Activated naive CD4-positive, alpha-beta T cell treated with anti-CD3 and anti-CD28 coated beads for 36 hours (primary cell): ENCODE measurements at regions of chr11 and their contacts with region 1.

Region 1: GRCh38 chr11:48307760-48308386 is 1.9 kb downstream of the OR4S1 start:
- DNase-seq: peak; percentile 87
- H3K4me3 Mint-ChIP-seq: no peak overlapping the region
- H3K27ac Mint-ChIP-seq: no peak overlapping the region
- H3K4me1 Mint-ChIP-seq: no peaks in the 10 kb centered on the region
- H3K27me3 Mint-ChIP-seq: peaks cover 10% of the 10 kb centered on the region

Region 2: GRCh38 chr11:48013269-48013901 is 294.5 kb before region 1 on chr11:
- CTCF ChIA-PET with region 1: no interaction called
- intact Hi-C with region 1: no loop called
- DNase-seq: peak; percentile 59
- H3K4me3 Mint-ChIP-seq: no peak overlapping the region
- H3K27ac Mint-ChIP-seq: peak overlapping the region; percentile 76
- H3K4me1 Mint-ChIP-seq: peaks cover 82% of the 10 kb centered on the region
- H3K27me3 Mint-ChIP-seq: no peaks in the 10 kb centered on the region

Region 3: DNA sequence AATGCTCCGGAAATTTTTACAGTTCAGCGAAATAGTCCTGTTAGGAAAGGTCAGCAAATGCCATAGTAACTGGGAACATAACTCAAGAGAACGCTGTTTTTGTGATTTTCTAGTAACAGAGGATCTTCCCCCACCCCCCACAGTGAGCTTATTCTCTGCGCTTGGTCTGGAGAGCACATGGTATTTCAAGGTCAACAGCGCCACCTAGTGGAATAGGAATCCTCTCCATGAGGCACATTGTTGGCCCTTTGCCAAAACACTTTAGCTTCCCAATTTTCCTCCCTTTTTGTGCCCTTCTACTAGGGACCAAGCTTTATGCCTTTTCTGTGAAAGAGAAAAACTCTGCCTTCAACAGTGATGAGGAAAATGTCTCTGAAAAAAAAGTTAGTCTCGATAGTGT is 1687.7 kb after region 1 on chr11:
- CTCF ChIA-PET with region 1: interaction called, 3 read pairs
- intact Hi-C with region 1: loop called (anchors 10 kb)
- DNase-seq: peak; percentile 58
- H3K4me3 Mint-ChIP-seq: no peak overlapping the region
- H3K27ac Mint-ChIP-seq: no peak overlapping the region
- H3K4me1 Mint-ChIP-seq: no peaks in the 10 kb centered on the region
- H3K27me3 Mint-ChIP-seq: no peaks in the 10 kb centered on the region